ENCODE measurements at regions of chr3 and their contacts with region 1.

Region 1: DNA sequence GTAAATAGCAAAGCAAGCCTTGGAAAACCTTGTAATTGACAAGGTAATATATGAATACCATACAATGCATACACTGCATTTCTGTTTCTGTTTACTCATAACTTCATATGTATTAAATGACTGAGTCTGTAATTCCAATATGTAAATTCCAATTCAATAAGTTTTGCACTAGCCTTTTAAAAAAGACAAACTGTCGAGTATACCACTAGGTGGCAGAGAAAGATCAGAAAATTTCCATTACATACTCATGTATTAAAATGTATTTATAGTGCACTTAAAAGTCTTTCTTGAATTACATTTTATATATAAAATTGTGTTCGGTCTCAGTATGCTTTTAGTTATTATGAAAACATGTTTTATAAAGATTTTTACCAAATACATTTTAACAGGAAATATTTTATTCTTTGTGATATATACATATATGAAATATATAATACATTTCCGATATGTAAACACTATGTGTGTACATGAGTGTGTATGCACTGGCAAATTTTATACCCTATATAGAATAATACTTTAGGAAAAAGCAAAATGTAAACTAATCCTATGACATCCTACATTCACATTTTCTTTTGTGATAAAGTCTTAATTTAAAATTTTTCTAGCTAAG is 216.8 kb downstream of the VGLL3 start:
- DNase-seq: no peak
- H3K4me3 ChIP-seq: no peak overlapping the region
- H3K27ac ChIP-seq: no peak overlapping the region
- H3K4me1 ChIP-seq: no peaks in the 10 kb centered on the region
- H3K27me3 ChIP-seq: no peaks in the 10 kb centered on the region
- CTCF ChIP-seq: peak; percentile 10 to 54 (median 26)
- POLR2A ChIP-seq: no peak

Region 2: GRCh38 chr3:87082796-87083440 is 308.7 kb after region 1 on chr3:
- intact Hi-C with region 1: loop called (anchors 10 kb)
- DNase-seq: peak in 1 of 7 donors; percentile 2
- H3K4me3 ChIP-seq: no peak overlapping the region
- H3K27ac ChIP-seq: no peak overlapping the region
- H3K4me1 ChIP-seq: no peaks in the 10 kb centered on the region
- H3K27me3 ChIP-seq: no peaks in the 10 kb centered on the region
- CTCF ChIP-seq: peak in 5 of 6 experiments; percentile 9 to 55 (median 38)
- POLR2A ChIP-seq: no peak

Region 3: GRCh38 chr3:87167628-87168456 is 393.7 kb after region 1 on chr3:
- intact Hi-C with region 1: loop called in 1 of 2 experiments (anchors 5 kb)
- DNase-seq: peak in 5 of 7 donors; percentile 17 to 48 (median 33)
- H3K4me3 ChIP-seq: peak overlapping the region in 2 of 4 donors; percentile 15 to 46
- H3K27ac ChIP-seq: no peak overlapping the region
- H3K4me1 ChIP-seq: no peaks in the 10 kb centered on the region
- H3K27me3 ChIP-seq: no peaks in the 10 kb centered on the region
- CTCF ChIP-seq: peak; percentile 17 to 71 (median 42)
- POLR2A ChIP-seq: no peak

Measured in adrenal gland (tissue), 19 donors.